CD8-positive, alpha-beta T cell (primary cell): ENCODE measurements at regions of chr7 and their contacts with region 1.

Region 1: DNA sequence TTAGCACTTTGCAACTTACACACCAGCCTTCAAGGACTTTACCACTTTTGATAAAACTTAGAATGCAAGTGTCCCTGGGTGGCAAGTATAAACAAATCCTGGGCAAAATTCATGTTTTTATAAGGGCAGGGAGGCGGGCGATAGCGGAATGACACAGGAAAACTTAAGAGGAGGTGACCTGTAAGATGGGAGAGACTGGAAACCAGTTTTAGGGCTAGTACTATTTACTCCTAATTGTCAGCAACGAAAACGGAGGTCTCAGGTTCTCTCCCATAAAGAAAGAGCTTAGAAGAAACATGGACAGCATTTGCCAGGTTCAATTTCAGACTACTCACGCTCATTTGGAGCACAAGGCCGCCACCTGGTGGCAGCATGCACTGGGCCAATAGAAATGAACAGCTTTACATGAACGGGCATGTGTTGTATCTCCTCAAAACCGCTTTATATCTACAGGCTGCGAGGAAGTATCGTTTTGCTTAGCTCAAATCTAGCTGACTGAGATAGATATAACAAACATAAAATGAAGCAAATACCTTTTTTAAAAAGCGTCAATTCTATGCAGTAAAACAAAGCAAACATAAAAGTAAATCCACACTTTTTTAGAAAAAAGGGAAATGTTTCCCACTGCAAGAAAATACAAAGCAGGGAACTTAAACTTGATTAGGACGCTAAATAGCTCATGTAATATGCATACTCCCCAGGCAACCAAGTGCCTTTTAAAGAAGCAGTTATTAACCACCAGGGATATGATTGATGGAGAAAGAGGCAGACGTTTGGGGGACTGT is 37.6 kb upstream of the SVOPL start:
- DNase-seq: peak; percentile 68 to 90 (median 84)
- ATAC-seq: peak; percentile 99
- H3K4me3 ChIP-seq: no peak overlapping the region
- H3K4me3 Mint-ChIP-seq: no peak overlapping the region
- H3K27ac ChIP-seq: no peak overlapping the region
- H3K27ac Mint-ChIP-seq: no peak overlapping the region
- H3K4me1 ChIP-seq: no peaks in the 10 kb centered on the region
- H3K4me1 Mint-ChIP-seq: peaks cover 3% of the 10 kb centered on the region
- H3K27me3 ChIP-seq: no peaks in the 10 kb centered on the region
- H3K27me3 Mint-ChIP-seq: no peaks in the 10 kb centered on the region
- CTCF ChIP-seq: peak; percentile 94

Region 2: DNA sequence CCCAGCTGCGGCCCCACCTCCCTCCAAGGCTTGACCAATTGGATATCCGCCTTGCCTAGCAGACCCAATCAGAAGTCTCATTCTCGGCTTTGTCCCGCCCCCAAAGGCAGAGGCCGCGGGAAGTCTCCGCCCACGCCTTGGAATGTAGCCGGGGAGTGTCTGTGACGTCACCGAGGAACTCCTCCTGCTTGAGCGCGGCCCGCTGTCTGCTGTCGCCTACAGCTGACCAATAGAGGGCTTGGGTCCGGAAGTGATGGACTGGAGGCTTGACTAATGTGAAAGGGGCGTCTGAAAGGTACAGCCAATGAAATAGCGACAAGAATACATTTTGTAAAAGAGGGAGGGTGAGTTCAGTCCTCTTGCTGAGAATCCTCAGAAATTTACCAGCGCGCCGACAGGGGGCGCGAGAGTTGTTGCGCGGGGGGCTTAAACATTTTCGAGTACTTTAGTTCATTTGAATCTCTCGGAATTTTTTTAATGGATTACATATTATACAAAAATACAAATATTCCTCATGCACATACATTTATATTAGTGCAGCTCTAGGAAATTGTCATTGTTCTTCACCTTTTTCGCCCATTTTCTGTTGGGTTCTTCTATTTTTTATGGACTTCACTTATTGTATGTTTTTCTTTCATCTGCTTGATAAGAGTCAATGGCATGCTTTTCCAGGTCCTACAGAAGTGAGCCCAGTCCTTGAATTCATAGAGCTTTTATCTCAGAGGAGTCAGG is 736.5 kb before region 1 on chr7:
- CTCF ChIA-PET with region 1: interaction called, 9 read pairs
- POLR2A ChIA-PET with region 1: no interaction called
- intact Hi-C with region 1: loop called in 1 of 2 experiments (anchors 5 kb)
- DNase-seq: peak; percentile 96 to 100 (median 98)
- ATAC-seq: peak; percentile 88
- H3K4me3 ChIP-seq: peak overlapping the region; percentile 81 to 97
- H3K4me3 Mint-ChIP-seq: peak overlapping the region; percentile 90
- H3K27ac ChIP-seq: peak overlapping the region; percentile 72 to 85
- H3K27ac Mint-ChIP-seq: peak overlapping the region; percentile 91
- H3K4me1 ChIP-seq: peaks cover 11% of the 10 kb centered on the region
- H3K4me1 Mint-ChIP-seq: peaks cover 33% of the 10 kb centered on the region
- H3K27me3 ChIP-seq: no peaks in the 10 kb centered on the region
- H3K27me3 Mint-ChIP-seq: no peaks in the 10 kb centered on the region
- CTCF ChIP-seq: peak; percentile 96

Region 3: DNA sequence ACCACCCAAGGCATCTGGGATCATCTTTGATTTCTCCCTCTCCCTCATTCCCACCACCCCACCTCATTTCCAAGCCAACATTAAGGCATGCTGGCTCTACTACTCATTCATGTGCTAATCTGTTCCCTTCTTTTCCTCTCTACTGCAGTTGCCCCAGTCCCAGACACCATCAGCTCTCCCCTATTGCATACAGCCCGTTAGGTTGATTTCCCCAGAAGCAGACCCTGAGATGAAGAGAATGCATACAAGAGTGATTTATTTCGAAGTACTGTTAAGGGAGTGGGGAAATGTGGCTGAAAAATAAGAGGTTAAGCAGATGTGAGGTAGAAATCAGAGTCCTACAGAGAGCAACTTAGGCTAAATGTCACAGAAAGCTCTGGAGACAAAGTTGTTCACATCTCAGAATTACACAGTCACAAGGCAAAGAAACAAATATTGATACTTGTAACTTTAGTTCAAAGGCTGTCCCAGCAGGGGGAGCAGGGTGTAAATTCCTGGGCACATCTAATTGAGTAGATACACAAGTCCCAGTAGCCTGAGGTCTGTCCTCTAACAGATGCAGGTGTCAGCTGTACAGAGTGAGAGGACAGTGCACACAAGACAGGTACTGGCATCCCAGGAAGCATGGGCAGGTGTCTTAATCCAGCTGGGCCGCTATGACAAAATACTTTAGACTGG is 641.5 kb before region 1 on chr7:
- CTCF ChIA-PET with region 1: interaction called, 3 read pairs
- POLR2A ChIA-PET with region 1: no interaction called
- intact Hi-C with region 1: loop called in 1 of 2 experiments (anchors 2 kb)
- DNase-seq: peak in 2 of 9 experiments; percentile 5 to 20
- ATAC-seq: no peak
- H3K4me3 ChIP-seq: no peak overlapping the region
- H3K4me3 Mint-ChIP-seq: no peak overlapping the region
- H3K27ac ChIP-seq: no peak overlapping the region
- H3K27ac Mint-ChIP-seq: no peak overlapping the region
- H3K4me1 ChIP-seq: no peaks in the 10 kb centered on the region
- H3K4me1 Mint-ChIP-seq: no peaks in the 10 kb centered on the region
- H3K27me3 ChIP-seq: no peaks in the 10 kb centered on the region
- H3K27me3 Mint-ChIP-seq: peaks cover 6% of the 10 kb centered on the region
- CTCF ChIP-seq: no peak

Region 4: DNA sequence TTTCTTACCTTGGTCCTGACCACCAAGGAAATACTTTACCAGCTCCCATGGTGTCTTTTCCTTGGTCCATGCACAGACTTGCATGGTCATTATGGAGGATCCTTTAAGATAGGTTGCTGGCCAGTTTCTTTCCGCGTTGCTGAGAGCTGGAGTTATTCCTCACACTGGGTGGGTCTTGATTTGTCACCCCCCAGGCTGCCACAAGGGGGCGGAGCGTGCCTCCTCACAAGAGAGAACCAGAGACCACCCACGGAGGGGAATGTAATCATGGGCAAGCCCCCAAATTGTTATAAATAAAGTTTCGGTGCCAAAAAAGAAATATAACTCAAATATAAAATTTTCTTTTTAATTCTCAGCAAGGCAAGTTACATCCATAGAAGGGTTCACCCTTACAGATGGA is 289.2 kb before region 1 on chr7:
- CTCF ChIA-PET with region 1: interaction called, 7 read pairs
- POLR2A ChIA-PET with region 1: no interaction called
- intact Hi-C with region 1: loop called (anchors 1 kb)
- DNase-seq: peak in 8 of 9 experiments; percentile 19 to 62 (median 41)
- ATAC-seq: no peak
- H3K4me3 ChIP-seq: no peak overlapping the region
- H3K4me3 Mint-ChIP-seq: no peak overlapping the region
- H3K27ac ChIP-seq: no peak overlapping the region
- H3K27ac Mint-ChIP-seq: no peak overlapping the region
- H3K4me1 ChIP-seq: no peaks in the 10 kb centered on the region
- H3K4me1 Mint-ChIP-seq: no peaks in the 10 kb centered on the region
- H3K27me3 ChIP-seq: no peaks in the 10 kb centered on the region
- H3K27me3 Mint-ChIP-seq: no peaks in the 10 kb centered on the region
- CTCF ChIP-seq: peak; percentile 43

Region 5: GRCh38 chr7:138865843-138866242 is 127.1 kb after region 1 on chr7:
- CTCF ChIA-PET with region 1: interaction called, 6 read pairs
- POLR2A ChIA-PET with region 1: no interaction called
- intact Hi-C with region 1: loop called (anchors 1 to 2 kb)
- DNase-seq: peak in 7 of 9 experiments; percentile 19 to 66 (median 56)
- ATAC-seq: peak; percentile 87
- H3K4me3 ChIP-seq: no peak overlapping the region
- H3K4me3 Mint-ChIP-seq: no peak overlapping the region
- H3K27ac ChIP-seq: no peak overlapping the region
- H3K27ac Mint-ChIP-seq: no peak overlapping the region
- H3K4me1 ChIP-seq: no peaks in the 10 kb centered on the region
- H3K4me1 Mint-ChIP-seq: peaks cover 4% of the 10 kb centered on the region
- H3K27me3 ChIP-seq: no peaks in the 10 kb centered on the region
- H3K27me3 Mint-ChIP-seq: peaks cover 3% of the 10 kb centered on the region
- CTCF ChIP-seq: peak; percentile 52